Posterior vena cava (tissue), 2 donors: ENCODE measurements at regions of chr15 and their contacts with region 1.

Region 1: DNA sequence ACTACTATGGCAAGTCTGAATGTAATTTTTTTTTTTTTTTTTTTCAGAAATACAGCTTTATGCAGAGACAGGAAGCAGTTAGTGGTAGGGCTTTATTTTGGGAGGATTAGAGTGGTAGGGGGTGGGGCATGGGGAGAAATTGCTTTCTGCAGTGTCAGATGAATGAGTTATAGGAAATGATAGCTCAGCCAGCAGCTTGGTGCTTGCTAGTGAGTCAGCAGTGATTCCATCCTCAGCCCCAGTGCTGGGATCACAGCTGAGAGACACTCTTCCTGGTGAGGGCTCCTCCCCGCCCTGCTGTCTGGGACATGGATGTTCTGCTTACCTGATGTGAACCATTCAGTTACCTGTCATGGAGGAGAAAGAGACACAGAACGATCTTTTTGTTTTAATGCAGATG is 39.6 kb downstream of the SEMA6D start:
- DNase-seq: no peak

Region 2: DNA sequence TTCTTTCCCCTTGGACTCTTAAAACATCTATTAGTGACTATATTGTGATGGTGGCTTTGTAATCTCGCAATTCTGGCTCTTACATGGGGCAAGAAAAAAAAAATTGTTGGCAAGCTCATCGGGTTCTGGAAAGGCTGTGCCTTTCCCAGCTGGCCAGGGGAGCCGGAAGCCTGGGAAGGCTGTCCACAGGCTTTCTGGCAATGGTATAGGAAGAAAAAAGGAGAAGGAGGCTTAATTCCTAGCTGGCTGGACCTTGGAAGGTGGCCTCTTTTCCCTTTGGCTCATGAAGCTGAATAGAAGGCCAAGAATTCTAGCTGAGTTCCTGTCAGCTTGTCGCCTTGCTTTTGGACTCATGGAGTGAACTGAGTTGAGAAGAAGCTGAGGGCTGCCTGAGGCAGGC is 283.0 kb before region 1 on chr15:
- intact Hi-C with region 1: no loop called
- DNase-seq: peak; percentile 86

Region 3: GRCh38 chr15:48244921-48245320 is 488.0 kb after region 1 on chr15:
- intact Hi-C with region 1: loop called in 1 of 2 experiments (anchors 5 kb)
- DNase-seq: no peak